GM10248 (cell line): ENCODE measurements at regions of chr3 and their contacts with region 1.

Region 1: GRCh38 chr3:186259612-186260383 is 102.2 kb downstream of the DGKG start:
- DNase-seq: peak; percentile 86
- CTCF ChIP-seq: peak; percentile 97

Region 2: GRCh38 chr3:185983495-185984141 is 276.2 kb before region 1 on chr3:
- CTCF ChIA-PET with region 1: interaction called, 31 read pairs
- POLR2A ChIA-PET with region 1: no interaction called
- DNase-seq: peak; percentile 81
- CTCF ChIP-seq: peak; percentile 89

Region 3: DNA sequence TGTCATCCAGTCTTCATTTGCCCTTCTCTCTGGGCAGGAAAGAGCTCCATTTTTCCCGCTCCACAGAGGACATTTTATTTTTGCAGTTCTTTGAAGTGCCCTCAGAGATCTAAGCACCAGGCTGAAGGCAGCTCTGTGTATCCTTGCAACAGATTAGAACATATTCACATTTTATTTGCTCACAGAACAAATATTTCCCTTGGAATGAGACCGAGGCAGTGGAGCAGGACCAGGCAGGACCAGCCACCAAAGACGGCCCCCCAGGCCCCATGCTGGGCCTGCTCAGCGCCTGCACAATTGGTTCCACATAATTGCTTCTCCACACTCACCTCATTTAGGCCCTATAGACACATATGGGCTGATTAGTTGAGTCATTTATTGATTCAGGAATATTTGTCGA is 135.2 kb before region 1 on chr3:
- CTCF ChIA-PET with region 1: no interaction called
- POLR2A ChIA-PET with region 1: no interaction called
- DNase-seq: no peak
- CTCF ChIP-seq: no peak

Region 4: DNA sequence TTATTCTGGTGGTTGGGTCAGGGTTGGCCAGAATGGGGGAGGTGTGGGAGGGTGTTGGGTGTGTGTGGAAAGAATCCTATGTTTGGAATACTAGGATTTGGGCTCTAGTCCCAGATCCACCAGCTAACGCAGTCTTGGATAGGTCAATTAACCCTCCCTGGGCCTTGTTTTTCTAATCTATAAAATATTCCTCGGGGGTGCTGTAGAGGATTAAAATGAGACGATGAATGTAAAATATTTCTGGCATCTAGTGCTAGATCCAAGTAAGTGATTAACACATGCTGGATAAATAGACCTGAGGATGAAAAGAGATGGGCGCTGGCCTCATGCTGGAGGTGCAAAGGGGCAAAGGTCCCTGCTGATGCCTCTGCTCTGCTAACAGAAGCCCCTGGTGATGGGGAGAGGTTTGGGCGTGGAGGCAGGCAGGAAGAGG is 83.3 kb before region 1 on chr3:
- CTCF ChIA-PET with region 1: no interaction called
- POLR2A ChIA-PET with region 1: no interaction called
- DNase-seq: no peak
- CTCF ChIP-seq: no peak

Region 5: DNA sequence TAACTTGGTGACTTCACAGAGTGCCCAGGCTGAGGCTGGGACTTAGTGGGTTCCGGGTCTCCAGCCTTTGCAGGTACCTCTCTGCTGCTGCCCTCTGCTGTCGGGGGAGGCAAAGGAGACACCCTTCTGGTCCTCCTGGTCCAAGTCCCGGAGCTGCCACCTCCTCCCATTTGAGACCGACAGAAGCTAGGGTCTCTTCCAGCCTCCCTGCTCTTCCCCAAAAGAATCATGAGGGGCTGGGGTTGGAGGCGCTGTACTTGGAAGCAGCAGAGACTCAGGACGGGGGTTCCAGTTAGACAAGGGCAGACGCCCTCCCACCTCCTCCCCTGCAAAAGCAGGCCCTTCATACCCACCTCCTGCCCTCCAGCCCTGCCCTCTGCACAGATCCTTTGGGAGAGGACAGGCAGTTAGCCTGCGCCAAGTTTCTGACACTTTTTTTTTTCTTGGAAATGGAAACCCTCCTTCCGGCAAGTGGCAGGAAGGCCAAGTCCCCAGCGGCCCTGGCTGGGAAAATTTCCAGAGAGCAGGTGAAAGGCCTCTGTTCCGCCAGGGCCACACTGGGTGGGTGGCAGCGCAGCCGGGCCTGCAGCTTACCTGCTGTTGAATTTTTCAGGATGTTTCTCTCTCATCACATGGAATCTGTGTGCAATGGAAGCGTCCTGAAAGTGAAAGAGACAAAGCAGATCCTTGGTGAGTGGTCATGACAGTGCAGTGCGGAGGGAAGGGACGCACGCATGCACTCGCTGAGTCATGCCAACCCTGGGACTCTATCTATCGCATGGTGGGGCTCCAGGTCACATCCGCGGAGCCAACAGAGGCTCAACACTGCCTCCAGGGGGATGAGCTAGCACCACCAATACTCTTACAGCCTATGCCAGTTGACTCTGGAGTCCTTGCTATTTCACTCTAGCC is 17.6 kb before region 1 on chr3:
- CTCF ChIA-PET with region 1: interaction called, 39 read pairs
- POLR2A ChIA-PET with region 1: no interaction called
- DNase-seq: peak; percentile 77
- CTCF ChIP-seq: peak; percentile 76

Region 6: DNA sequence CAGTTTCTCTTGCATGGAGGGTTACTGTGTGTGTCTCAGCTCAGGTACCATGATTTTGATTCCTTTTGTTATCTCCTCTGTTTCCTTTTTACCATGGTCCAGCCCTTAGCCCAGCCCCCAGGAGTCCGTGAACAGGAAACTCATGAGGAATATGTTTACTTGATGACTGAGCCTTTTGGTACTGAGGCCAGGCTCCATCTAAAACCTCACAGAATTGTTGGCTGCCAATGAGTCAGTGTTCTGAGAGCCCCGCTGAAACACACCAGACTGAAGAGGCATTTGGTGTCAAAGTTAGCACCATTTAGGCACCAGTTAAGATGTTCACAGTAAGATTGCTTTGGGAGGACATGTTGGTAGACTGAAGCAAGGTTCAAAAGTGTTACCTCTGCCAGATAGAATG is 21.4 kb after region 1 on chr3:
- CTCF ChIA-PET with region 1: interaction called, 11 read pairs
- POLR2A ChIA-PET with region 1: no interaction called
- DNase-seq: no peak
- CTCF ChIP-seq: no peak

Region 7: DNA sequence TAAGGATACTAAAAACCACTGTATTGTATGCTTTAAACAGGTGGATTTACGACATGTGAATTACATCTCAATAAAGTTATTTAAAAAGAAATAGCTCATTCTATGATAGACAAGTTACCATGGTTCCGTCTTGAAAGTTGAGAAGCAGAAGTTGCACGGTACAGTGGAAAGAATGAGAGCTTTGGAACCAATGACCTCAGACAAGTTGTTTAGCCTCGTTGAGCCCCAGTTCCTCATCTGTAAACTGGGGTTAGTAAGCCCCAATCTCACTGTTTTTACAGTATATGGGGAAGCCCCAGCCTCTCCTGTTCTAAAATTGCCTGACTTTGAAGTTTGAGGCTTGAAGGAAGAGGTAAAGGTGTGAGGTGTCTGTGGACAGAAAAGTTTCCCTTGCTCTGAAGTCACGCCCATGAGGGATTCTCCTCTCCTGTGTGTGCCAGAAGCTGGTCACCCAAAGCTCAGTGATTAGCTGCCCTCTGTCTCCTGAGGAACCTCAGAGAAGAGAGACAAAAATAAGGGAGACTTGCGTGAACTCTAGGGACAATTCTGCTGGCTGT is 274.4 kb after region 1 on chr3:
- CTCF ChIA-PET with region 1: interaction called, 356 read pairs
- POLR2A ChIA-PET with region 1: no interaction called
- DNase-seq: peak; percentile 64
- CTCF ChIP-seq: no peak